Natural killer cell (primary cell): ENCODE measurements at regions of chr19 and their contacts with region 1.

Region 1: DNA sequence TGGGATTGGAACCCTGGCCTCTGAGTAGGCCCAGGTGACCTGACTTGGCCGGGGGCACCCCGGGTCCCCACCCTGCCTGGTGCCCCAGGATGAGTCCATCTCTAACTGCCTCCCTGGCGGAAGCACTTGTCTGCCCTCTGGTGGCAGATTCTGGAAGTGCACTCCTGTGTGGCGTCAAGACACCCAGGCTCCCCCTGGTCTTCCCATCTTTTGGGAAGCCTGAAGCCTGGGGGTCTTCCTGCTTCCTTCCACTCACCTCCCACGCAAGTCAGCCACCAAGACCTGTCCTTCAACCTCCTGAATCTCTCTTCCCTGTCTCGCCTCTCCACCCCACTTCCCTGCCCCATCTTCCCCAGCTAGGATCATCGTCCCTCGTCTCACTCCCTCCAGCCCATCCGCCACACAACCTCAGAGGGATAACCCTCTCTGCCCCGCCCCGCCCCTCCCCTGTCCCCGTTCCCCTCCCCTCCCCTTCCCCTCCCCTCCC is 7.4 kb downstream of the RABAC1 start:
- DNase-seq: peak; percentile 89 to 93
- ATAC-seq: peak; percentile 88 to 96 (median 95)
- H3K4me3 ChIP-seq: no peak overlapping the region
- H3K4me3 Mint-ChIP-seq: peak overlapping the region; percentile 9
- H3K27ac ChIP-seq: no peak overlapping the region
- H3K27ac Mint-ChIP-seq: peak overlapping the region in 1 of 2 donors; percentile 81
- H3K4me1 ChIP-seq: peaks cover 21% of the 10 kb centered on the region
- H3K4me1 Mint-ChIP-seq: peaks cover 18 to 24% of the 10 kb centered on the region in 2 donors
- H3K27me3 ChIP-seq: no peaks in the 10 kb centered on the region
- H3K27me3 Mint-ChIP-seq: no peaks in the 10 kb centered on the region
- CTCF ChIP-seq: peak; percentile 99

Region 2: DNA sequence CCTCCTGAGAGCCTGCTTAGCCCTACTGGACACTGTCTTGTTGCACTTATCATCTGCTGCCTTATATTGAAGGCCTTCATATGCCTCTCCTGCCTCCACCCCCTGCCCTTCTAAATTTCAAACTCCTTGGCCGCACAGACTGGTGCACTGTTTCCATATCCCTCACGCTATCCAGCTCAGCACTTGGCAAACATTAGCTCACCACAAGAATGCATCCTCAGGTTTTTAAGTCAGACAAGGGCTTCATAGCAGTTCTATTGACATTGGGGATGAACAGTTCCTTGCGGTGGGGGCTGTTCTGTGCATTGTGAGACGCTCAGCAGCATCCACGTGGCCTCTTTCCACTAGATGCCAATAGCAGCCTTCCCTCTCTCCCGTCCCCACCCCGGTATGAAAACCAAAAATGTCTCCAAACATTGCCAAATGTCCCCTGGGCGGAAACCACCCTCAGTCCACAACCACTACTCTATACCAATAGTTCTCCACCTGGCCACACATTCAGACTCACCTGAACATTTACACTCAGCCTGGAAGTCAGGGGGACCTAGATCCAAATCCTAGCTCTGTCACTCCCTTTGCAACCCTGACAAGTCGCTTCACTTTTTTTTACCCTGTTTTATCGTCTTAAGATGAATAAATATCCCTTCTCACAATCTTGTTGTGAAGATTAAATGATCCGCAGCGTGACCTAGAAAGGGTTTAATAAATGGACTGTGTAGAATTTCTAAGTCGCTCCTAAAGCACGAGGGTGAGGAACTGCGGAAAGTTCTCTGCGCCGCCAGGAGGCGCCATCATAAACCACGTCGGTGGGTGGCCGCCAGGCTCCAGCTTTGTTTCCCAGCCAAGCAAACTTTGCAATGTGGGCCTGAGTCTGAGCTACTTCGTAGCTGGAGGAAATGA is 159.0 kb before region 1 on chr19:
- intact Hi-C with region 1: loop called (anchors 5 kb)
- DNase-seq: peak; percentile 41 to 75
- ATAC-seq: peak in 1 of 3 donors; percentile 58
- H3K4me3 ChIP-seq: no peak overlapping the region
- H3K4me3 Mint-ChIP-seq: no peak overlapping the region
- H3K27ac ChIP-seq: no peak overlapping the region
- H3K27ac Mint-ChIP-seq: no peak overlapping the region
- H3K4me1 ChIP-seq: peaks cover 11% of the 10 kb centered on the region
- H3K4me1 Mint-ChIP-seq: peaks cover 0 to 9% of the 10 kb centered on the region in 2 donors
- H3K27me3 ChIP-seq: peaks cover 2% of the 10 kb centered on the region
- H3K27me3 Mint-ChIP-seq: peaks cover 25 to 37% of the 10 kb centered on the region in 2 donors
- CTCF ChIP-seq: peak; percentile 75